GM23248 (cell line): ENCODE measurements at regions of chr6 and their contacts with region 1.

Region 1: DNA sequence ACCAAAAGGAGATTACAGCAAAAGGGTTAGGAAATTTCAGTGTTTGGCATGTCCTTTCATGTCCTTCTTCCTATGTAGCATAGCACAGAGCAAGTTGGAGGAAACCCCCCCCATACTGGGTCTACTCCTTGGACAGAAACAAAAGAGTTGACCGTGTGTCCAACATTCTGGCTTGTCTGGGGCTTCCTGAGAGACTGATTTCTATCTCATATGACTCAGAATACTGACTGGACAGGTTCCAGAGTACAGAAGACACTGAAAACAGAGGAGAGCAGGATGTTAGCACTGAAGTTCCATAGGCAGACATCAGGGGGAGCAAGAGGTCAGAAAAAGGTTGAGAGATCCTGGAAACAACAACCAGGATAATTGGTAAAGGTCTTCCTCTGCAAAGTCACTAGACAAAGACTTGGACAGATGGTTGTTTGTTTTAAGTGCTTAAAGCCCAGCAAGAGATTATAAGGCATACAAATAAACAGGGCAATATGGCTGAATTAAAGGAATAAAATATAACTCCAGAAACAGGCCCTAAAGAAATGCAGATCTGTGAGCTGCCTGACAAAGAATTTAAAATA is 48.4 kb downstream of the USP49 start:
- DNase-seq: peak; percentile 93
- H3K4me3 ChIP-seq: peak overlapping the region; percentile 14; the same call in 1 of the 2 replicates
- H3K27ac ChIP-seq: peak overlapping the region; percentile 45
- H3K4me1 ChIP-seq: peaks cover 5% of the 10 kb centered on the region
- H3K27me3 ChIP-seq: no peaks in the 10 kb centered on the region

Region 2: GRCh38 chr6:41936073-41936837 is 89.5 kb after region 1 on chr6:
- in situ Hi-C with region 1: loop called (anchors 5 kb)
- DNase-seq: peak; percentile 94
- H3K4me3 ChIP-seq: no peak overlapping the region
- H3K27ac ChIP-seq: peak overlapping the region; percentile 60
- H3K4me1 ChIP-seq: peaks cover 37% of the 10 kb centered on the region
- H3K27me3 ChIP-seq: no peaks in the 10 kb centered on the region

Region 3: DNA sequence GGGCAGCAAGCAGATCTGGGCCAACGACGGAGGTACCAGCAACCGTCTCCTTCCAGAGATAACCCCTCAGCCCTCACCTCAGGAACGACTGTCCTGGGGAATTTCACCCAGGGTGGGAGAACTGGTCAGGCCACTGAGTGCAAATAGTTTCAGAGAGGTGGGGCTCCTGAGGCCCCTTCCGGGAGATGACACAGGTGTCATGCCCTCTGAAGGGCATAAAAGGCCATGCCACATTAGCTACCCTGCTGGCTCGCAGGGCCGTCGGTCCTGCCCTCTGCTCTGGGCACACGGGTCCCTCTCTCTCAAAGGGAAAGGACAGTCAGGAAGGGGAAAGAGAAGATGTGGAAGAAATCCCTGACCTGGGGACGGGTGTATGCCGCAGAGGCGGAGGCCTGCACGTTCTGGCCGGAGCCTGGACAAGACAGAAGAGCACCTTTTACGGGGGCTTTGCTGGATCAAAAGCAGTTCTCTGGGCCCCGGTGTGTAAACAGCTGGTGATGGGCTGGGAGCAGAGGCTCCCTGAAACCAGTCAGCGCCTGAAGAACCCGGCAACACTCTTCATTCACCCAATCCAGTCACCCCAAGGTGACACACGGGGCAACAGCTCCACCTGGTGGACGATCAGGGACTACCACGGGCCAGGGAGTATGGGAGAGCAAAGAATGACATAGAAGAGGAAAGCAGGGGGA is 197.2 kb after region 1 on chr6:
- in situ Hi-C with region 1: loop called (anchors 25 kb)
- DNase-seq: peak; percentile 85
- H3K4me3 ChIP-seq: no peak overlapping the region
- H3K27ac ChIP-seq: no peak overlapping the region
- H3K4me1 ChIP-seq: no peaks in the 10 kb centered on the region
- H3K27me3 ChIP-seq: no peaks in the 10 kb centered on the region